ENCODE measurements at regions of chr3 and their contacts with region 1.

Region 1: DNA sequence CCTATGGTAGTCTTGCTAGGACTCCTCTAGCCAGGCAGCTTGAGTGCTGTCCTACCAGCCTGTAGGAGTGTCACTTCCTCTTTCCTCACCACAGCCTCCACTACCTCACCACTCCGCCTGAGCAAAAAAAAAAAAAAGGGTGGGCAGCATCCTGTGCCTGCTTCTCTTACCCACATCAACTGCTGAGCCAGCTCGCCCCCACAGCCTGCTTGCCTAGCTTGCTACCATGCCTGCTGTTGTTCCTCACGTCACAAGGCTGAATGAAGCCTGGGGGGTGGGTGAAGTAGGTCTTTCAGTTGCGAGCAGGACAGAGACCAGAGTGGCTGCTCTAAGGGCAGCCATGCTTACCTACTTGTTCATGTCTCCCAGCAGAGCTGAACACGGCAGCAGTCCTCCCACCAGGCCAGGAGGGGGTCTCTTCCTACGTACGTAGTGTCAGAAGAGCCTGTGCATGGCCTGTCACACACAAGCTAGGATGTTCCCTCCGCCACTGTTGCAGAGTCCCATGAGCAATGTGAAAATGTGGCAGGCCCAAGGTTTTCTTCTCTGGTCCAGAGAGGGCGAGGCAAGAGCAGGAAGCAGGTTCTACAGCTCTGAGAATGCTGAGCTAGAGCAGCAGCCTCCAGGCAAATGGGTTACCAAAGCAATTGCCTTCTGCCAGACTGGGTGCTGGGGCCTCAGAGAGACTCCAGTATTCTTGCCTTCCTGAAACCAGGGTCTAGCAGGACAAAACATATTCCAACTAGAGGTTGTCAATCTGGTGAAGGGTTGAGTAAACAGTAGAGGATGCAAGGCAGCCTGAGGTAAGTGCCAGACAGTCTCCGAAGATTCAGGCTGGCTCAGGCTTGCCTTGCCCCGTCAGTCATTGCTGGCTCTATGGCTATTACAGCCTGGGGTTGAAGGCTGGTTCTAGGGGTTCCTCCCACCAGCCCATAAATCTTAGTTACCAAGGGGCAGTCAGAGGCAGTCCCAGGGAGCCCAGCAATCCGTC is 8.1 kb downstream of the PPM1M start:
- DNase-seq: peak; percentile 73 to 95 (median 82)
- ATAC-seq: peak; percentile 83
- H3K4me3 ChIP-seq: peak overlapping the region; percentile 30
- H3K4me3 Mint-ChIP-seq: peak overlapping the region; percentile 89
- H3K27ac ChIP-seq: peak overlapping the region; percentile 82 to 89
- H3K27ac Mint-ChIP-seq: peak overlapping the region; percentile 95
- H3K4me1 ChIP-seq: peaks cover 100% of the 10 kb centered on the region
- H3K4me1 Mint-ChIP-seq: peaks cover 93% of the 10 kb centered on the region
- H3K27me3 ChIP-seq: no peaks in the 10 kb centered on the region
- H3K27me3 Mint-ChIP-seq: no peaks in the 10 kb centered on the region
- CTCF ChIP-seq: no peak

Region 2: DNA sequence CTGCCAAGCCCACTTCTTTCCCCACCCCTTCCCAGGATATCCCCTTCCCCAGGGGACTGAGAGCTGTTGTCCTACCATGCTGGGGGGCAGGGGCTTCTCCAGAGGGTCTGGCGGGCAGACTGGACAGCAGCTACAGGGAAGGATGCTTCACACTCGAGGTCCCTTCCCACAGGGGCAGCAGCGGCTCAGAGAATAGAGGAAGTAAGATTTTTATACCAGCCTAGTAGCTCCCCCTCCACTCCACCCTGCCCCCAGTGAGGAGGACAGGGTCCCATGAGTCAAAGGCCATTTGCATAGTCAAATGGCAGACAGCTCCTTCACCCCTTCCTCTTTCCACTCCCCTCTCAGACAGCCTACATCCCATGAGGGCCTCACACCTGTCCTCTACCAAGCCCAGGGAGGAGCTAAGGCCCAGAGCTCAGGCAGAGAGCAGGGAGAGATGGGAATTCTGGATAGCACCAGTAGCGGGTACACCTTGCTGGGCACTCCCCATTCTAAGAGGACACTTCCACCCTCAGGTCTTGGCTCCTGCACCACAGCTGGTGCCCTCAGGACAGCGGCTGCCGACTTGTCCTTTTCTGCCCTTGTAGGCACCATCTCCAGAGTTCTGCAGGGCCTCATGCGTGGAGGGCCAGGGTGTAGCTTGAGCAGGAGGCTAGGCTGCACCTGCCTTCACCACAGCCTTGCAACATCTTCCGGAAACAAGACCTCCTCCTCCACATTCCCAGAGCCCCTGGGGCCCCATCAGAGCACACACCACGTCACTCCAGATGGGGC is 28.0 kb before region 1 on chr3 and contains the start of gene TLR9:
- CTCF ChIA-PET with region 1: interaction called, 8 read pairs
- POLR2A ChIA-PET with region 1: interaction called, 37 read pairs
- intact Hi-C with region 1: no loop called
- DNase-seq: peak in 5 of 14 experiments; percentile 33 to 62 (median 44)
- ATAC-seq: peak; percentile 59
- H3K4me3 ChIP-seq: no peak within 1 kb of the TSS
- H3K4me3 Mint-ChIP-seq: peak within 1 kb of the TSS; percentile 73
- H3K27ac ChIP-seq: peak within 1 kb of the TSS; percentile 51 to 64
- H3K27ac Mint-ChIP-seq: peak within 1 kb of the TSS; percentile 90
- H3K4me1 ChIP-seq: peaks cover 76% of the 10 kb centered on the region
- H3K4me1 Mint-ChIP-seq: peaks cover 68% of the 10 kb centered on the region
- H3K27me3 ChIP-seq: no peaks in the 10 kb centered on the region
- H3K27me3 Mint-ChIP-seq: no peaks in the 10 kb centered on the region
- CTCF ChIP-seq: no peak
- total RNA-seq, gene TLR9: 0.08 to 0.17 TPM

Region 3: DNA sequence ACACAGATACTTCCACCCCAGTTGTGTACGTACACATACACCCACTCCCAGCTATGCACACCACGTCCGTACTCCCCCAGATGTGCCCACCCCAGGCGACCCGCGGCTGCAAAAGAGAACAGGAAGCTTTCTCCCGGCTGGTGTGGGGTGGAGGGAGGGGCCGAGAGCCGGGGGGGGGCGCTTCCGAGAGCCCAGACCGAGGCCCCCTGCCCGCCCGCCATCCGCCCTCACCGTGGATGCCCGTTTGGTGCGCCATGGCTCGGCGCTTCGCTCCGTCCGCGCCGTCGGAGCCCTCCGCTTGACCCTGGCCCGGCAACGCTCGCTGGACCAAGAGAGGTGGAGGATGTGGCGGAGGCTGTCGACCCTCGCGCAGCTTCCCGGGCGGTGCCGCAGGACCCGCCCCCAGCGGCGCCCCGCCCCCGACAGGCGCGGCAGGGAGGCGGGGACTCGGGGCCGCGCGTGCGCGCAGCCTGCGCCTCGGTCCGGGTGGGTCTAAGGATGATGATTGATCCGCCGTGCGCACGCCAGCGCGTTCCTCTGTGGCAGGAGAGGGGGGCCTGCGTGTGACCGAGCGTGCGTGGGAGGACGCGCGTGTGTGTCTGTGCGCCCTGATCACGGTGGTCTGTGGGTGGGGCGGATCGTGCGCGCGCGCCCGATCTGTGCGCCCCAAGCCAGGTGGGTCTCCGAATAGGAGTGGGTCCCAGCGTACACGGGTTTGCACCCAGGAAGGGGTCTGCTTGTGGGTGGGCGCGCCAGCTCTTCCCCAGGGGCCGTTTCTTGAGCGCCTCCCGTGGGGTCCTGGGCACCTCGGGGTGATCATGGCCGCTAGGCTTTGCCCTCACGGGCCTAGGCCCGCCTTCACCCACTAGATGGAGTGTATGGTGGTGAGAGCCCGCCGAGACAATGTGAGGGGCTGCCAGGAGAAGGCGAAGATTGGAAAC is 14.6 kb before region 1 on chr3 and contains the start of gene TWF2:
- CTCF ChIA-PET with region 1: interaction called, 12 read pairs
- POLR2A ChIA-PET with region 1: interaction called, 293 read pairs
- intact Hi-C with region 1: loop called (anchors 1 to 2 kb)
- DNase-seq: peak; percentile 69 to 93 (median 84)
- ATAC-seq: peak; percentile 79
- H3K4me3 ChIP-seq: peak within 1 kb of the TSS; percentile 99
- H3K4me3 Mint-ChIP-seq: peak within 1 kb of the TSS; percentile 99
- H3K27ac ChIP-seq: peak within 1 kb of the TSS; percentile 81 to 95
- H3K27ac Mint-ChIP-seq: peak within 1 kb of the TSS; percentile 99
- H3K4me1 ChIP-seq: peaks cover 80% of the 10 kb centered on the region
- H3K4me1 Mint-ChIP-seq: peaks cover 86% of the 10 kb centered on the region
- H3K27me3 ChIP-seq: no peaks in the 10 kb centered on the region
- H3K27me3 Mint-ChIP-seq: no peaks in the 10 kb centered on the region
- CTCF ChIP-seq: peak; percentile 63
- total RNA-seq, gene TWF2: 17.4 to 21.7 TPM

Measured in CD4-positive, alpha-beta T cell (primary cell).